Gastrocnemius medialis (tissue), 4 donors: ENCODE measurements at regions of chr18 and their contacts with region 1.

Region 1: DNA sequence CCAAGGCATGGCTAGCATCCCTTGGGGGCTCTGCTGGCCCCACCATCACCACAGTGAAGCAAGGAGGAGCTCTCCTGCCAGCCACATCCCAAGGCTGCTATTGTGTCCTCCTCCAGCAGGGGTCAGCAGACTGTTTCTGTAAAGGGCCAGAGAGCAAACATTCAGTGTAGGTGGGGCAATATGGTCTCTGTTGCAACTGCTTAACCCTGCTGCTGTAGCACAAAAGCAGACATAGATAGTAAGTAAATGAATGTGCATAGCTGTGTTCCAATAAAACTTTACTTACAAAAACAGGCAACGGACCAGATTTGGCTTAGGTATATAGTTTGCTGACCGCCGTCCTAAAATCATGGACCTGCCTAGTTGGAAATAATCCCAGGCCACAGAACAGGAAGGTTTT is 36.4 kb upstream of the ZBTB7C start:
- DNase-seq: peak; percentile 21 to 64
- ATAC-seq: peak in 1 of 2 donors; percentile 75
- H3K4me3 ChIP-seq: no peak overlapping the region
- H3K27ac ChIP-seq: no peak overlapping the region
- H3K4me1 ChIP-seq: peaks cover 20 to 23% of the 10 kb centered on the region in 2 donors
- H3K27me3 ChIP-seq: no peaks in the 10 kb centered on the region
- CTCF ChIP-seq: peak; percentile 56 to 79 (median 65)
- POLR2A ChIP-seq: no peak

Region 2: GRCh38 chr18:48030616-48031480 is 414.7 kb before region 1 on chr18:
- in situ Hi-C with region 1: loop called (anchors 5 to 10 kb)
- intact Hi-C with region 1: loop called (anchors 1 kb)
- DNase-seq: peak in 1 of 2 donors; percentile 25
- ATAC-seq: peak; percentile 73 to 79
- H3K4me3 ChIP-seq: no peak overlapping the region
- H3K27ac ChIP-seq: no peak overlapping the region
- H3K4me1 ChIP-seq: no peaks in the 10 kb centered on the region
- H3K27me3 ChIP-seq: no peaks in the 10 kb centered on the region
- CTCF ChIP-seq: peak; percentile 39 to 65 (median 54)
- POLR2A ChIP-seq: no peak

Region 3: DNA sequence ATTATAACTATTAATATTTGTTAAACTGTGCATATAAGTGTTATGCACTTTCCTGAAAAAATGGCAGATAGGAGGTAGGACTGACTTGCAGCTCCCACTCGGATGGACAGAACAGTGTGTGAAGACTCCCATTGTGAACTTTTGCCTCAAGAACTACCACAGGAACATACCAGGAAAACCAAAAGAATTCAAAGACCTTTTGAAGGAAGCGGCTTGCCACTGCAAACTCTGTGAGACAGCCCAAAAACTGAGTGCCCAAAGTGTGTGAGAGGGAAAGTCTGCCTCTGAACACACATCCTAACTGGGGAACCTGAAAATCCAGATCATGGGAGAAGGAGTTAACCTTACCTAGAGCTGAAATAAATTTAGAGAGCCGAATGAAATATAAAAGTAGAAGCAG is 207.3 kb before region 1 on chr18:
- in situ Hi-C with region 1: loop called in 3 of 4 experiments (anchors 5 to 10 kb)
- intact Hi-C with region 1: no loop called
- DNase-seq: no peak
- ATAC-seq: no peak
- H3K4me3 ChIP-seq: no peak overlapping the region
- H3K27ac ChIP-seq: no peak overlapping the region
- H3K4me1 ChIP-seq: no peaks in the 10 kb centered on the region
- H3K27me3 ChIP-seq: no peaks in the 10 kb centered on the region
- CTCF ChIP-seq: no peak
- POLR2A ChIP-seq: no peak

Region 4: GRCh38 chr18:48250362-48250907 is 195.1 kb before region 1 on chr18:
- in situ Hi-C with region 1: no loop called
- intact Hi-C with region 1: no loop called
- DNase-seq: no peak
- ATAC-seq: no peak
- H3K4me3 ChIP-seq: no peak overlapping the region
- H3K27ac ChIP-seq: no peak overlapping the region
- H3K4me1 ChIP-seq: no peaks in the 10 kb centered on the region
- H3K27me3 ChIP-seq: no peaks in the 10 kb centered on the region
- CTCF ChIP-seq: no peak
- POLR2A ChIP-seq: no peak

Region 5: GRCh38 chr18:48345596-48345995 is 99.9 kb before region 1 on chr18:
- in situ Hi-C with region 1: loop called in 1 of 4 experiments (anchors 10 kb)
- intact Hi-C with region 1: loop called (anchors 5 kb)
- DNase-seq: no peak
- ATAC-seq: no peak
- H3K4me3 ChIP-seq: no peak overlapping the region
- H3K27ac ChIP-seq: no peak overlapping the region
- H3K4me1 ChIP-seq: peaks cover 0 to 5% of the 10 kb centered on the region in 2 donors
- H3K27me3 ChIP-seq: no peaks in the 10 kb centered on the region
- CTCF ChIP-seq: peak in 3 of 5 experiments; percentile 21 to 47 (median 34)
- POLR2A ChIP-seq: no peak

Region 6: DNA sequence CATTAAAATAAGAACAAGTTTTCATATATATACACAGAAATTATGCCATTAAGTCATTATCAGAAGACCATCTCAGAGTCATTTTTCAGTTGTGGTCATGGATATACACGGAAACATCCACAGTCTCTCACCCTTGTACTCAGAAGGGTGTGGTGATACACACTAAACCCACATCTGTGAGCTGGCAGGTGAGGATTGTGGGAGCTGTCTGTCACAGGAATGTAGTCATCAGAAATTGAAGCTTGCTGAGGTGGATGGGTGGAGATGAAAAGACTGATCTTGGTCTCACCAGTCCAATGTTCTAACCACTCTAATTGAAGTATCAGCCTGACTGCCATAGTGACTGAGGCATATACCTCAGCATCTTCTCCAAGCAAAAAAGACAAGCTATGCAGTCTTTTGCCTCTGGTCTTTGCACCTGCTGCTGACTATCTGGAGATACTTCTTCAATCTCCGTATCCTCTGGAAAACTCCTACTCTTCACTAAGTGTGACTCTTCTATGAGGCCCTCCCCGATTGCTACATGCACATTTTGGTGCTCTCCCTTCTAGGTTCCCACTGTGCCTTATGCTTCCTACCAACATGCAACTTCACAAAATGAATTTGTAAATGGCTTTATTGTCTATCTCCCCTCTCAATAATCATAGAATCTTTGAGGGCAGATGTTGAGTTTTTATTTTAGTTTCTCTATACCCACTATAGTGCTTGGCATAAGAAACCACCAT is 782.1 kb after region 1 on chr18:
- in situ Hi-C with region 1: no loop called
- intact Hi-C with region 1: no loop called
- DNase-seq: no peak
- ATAC-seq: no peak
- H3K4me3 ChIP-seq: no peak overlapping the region
- H3K27ac ChIP-seq: no peak overlapping the region
- H3K4me1 ChIP-seq: no peaks in the 10 kb centered on the region
- H3K27me3 ChIP-seq: no peaks in the 10 kb centered on the region
- CTCF ChIP-seq: no peak
- POLR2A ChIP-seq: no peak